ENCODE measurements at regions of chr9 and their contacts with region 1.

Region 1: GRCh38 chr9:86354011-86354817 is at the start of gene TUT7:
- DNase-seq: peak; percentile 95
- H3K4me3 Mint-ChIP-seq: peak within 1 kb of the TSS; percentile 88
- H3K27ac Mint-ChIP-seq: peak within 1 kb of the TSS; percentile 95
- H3K4me1 Mint-ChIP-seq: peaks cover 30% of the 10 kb centered on the region
- H3K27me3 Mint-ChIP-seq: no peaks in the 10 kb centered on the region
- total RNA-seq, gene TUT7: 22.7 to 23.5 TPM

Region 2: GRCh38 chr9:85741875-85742629 is 612.2 kb before region 1 on chr9 and contains the start of gene AGTPBP1:
- CTCF ChIA-PET with region 1: no interaction called
- intact Hi-C with region 1: loop called (anchors 1 kb)
- DNase-seq: peak; percentile 95
- H3K4me3 Mint-ChIP-seq: peak within 1 kb of the TSS; percentile 83
- H3K27ac Mint-ChIP-seq: peak within 1 kb of the TSS; percentile 94
- H3K4me1 Mint-ChIP-seq: peaks cover 30% of the 10 kb centered on the region
- H3K27me3 Mint-ChIP-seq: peaks cover 6% of the 10 kb centered on the region
- total RNA-seq, gene AGTPBP1: 37.6 to 39.0 TPM

Region 3: DNA sequence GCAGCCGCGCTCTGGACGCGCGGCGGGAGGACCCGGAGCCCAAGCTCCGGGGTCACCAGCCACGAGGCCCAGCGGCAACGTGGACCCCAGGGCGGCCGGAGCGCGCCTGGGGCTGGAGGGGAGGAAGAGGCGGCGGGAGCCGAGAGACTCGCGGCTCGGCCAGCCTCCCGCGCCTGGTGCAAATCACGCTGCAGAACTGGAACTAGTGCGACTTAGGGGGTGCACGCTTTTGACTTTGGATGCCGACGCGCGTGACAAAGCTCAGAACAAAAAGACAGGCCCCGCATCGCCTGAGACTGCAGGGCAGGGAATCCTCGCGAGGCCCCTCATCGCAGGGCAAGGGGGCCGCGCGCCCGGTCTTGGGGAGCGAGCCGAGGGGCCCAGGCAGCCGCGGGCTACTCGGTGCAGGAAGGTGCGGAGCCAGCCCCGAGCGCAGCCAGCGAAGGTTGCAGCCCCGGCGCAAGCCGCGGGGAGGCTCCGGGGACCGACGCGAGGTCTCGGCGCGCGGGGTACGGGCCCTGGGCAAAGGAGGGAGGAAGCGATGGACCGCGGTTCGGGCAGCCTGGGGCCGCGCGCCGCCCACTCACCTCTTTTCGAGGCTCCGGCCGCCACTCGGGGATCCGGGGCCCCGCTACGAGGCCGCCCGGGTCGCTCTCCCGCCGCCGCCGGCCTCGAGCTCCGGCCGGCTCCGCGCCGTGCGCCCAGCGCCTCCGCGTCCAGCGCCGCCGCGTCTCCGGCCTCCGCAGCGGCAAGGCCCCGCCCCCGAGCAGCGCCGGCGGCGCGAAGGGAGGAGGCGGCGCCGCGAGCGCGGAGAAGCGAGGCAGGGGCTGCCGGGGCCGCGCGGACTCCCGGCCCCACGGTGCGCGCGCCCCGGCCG is 255.2 kb before region 1 on chr9 and contains the start of gene GOLM1:
- CTCF ChIA-PET with region 1: no interaction called
- intact Hi-C with region 1: loop called (anchors 5 kb)
- DNase-seq: peak; percentile 40
- H3K4me3 Mint-ChIP-seq: peak within 1 kb of the TSS; percentile 77
- H3K27ac Mint-ChIP-seq: no peak within 1 kb of the TSS
- H3K4me1 Mint-ChIP-seq: peaks cover 4% of the 10 kb centered on the region
- H3K27me3 Mint-ChIP-seq: peaks cover 30% of the 10 kb centered on the region
- total RNA-seq, gene GOLM1: 0.89 to 0.93 TPM

Region 4: DNA sequence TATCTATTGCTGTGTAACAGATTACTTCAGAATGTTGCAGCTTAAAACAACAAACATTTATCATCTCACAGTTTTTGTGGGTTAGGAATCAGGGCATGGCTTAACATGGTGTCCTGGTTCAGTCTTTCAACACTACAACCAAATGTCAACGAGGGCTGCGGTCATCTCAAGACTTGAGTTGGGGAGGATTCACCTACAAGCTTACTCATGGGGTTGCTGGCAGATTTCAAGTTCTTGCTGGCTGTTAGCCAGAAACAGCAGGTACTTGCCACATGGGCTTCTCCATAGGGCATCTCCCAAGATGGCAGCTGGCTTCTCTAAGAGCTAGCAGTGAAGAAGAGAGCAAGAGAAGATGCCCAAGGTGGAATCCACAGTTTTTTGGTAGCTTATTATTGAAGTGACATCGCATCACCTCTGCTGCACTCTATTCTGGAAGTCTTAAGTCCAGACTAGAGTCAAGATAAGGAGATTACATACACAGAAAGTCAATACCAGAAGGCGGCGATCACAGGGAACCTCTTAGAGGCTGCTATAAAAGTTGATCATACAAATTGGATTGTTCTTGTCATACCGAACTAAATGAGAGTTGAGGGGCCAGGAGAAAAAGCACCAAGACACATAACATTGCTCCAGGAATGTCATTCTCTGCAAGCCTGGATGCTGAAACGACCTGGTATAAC is 137.0 kb before region 1 on chr9:
- CTCF ChIA-PET with region 1: no interaction called
- intact Hi-C with region 1: no loop called
- DNase-seq: no peak
- H3K4me3 Mint-ChIP-seq: no peak overlapping the region
- H3K27ac Mint-ChIP-seq: no peak overlapping the region
- H3K4me1 Mint-ChIP-seq: no peaks in the 10 kb centered on the region
- H3K27me3 Mint-ChIP-seq: peaks cover 3% of the 10 kb centered on the region

Region 5: GRCh38 chr9:86282077-86282978 is 71.9 kb before region 1 on chr9 and contains the start of gene ISCA1:
- CTCF ChIA-PET with region 1: no interaction called
- intact Hi-C with region 1: loop called (anchors 1 kb)
- DNase-seq: peak; percentile 96
- H3K4me3 Mint-ChIP-seq: peak within 1 kb of the TSS; percentile 89
- H3K27ac Mint-ChIP-seq: peak within 1 kb of the TSS; percentile 94
- H3K4me1 Mint-ChIP-seq: peaks cover 40% of the 10 kb centered on the region
- H3K27me3 Mint-ChIP-seq: no peaks in the 10 kb centered on the region
- total RNA-seq, gene ISCA1: 18.4 to 18.7 TPM

Region 6: DNA sequence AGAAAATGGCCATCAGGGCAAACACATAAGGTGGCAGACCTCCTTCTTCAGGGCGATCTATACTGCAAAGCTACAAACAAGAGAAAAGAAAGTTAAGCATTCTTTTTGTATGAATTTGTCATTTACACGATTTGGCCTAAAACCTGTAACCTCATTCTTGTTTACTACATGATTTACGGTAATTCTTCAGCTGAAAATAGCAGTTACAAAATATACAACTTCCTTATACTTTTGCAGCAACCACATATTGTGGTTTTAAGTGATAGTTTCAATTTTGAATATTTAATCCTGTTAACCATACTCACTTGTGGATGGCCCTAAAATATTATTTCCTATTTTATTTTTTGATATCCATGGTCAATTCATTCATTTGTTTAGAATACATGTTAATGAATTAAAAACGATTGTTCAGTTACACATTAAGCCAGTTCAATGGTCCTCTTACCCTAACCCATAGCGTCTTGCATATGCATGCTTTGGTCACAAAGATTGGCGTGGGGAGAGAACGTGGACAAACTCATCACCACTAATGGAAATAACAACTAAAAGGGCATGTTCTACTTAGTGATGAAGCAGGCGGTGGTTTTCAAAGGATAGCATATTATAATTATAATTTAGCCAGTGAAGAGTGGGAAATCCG is 16.6 kb before region 1 on chr9:
- CTCF ChIA-PET with region 1: no interaction called
- intact Hi-C with region 1: loop called (anchors 1 kb)
- DNase-seq: no peak
- H3K4me3 Mint-ChIP-seq: no peak overlapping the region
- H3K27ac Mint-ChIP-seq: no peak overlapping the region
- H3K4me1 Mint-ChIP-seq: peaks cover 39% of the 10 kb centered on the region
- H3K27me3 Mint-ChIP-seq: no peaks in the 10 kb centered on the region

Region 7: DNA sequence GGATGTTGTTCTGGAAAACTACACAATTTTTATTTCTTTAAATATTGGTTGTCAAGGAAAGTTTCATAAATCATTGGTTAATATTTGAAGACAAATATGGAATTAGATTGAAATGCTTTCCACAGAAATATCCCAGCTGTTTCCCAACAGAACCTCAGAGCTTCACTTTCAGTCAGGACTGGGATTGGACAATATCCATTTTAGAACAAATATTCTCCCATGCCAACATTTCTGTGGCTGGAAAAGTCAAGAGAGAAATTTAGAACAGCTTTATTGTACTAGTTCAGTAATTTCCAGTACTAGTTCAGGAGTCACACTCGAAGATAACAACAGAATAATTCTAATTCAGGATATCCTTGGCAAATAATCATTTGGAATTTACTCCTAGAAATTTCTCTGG is 116.1 kb after region 1 on chr9:
- CTCF ChIA-PET with region 1: no interaction called
- intact Hi-C with region 1: no loop called
- DNase-seq: no peak
- H3K4me3 Mint-ChIP-seq: no peak overlapping the region
- H3K27ac Mint-ChIP-seq: no peak overlapping the region
- H3K4me1 Mint-ChIP-seq: no peaks in the 10 kb centered on the region
- H3K27me3 Mint-ChIP-seq: peaks cover 16% of the 10 kb centered on the region

Region 8: GRCh38 chr9:86948074-86948929 is 594.1 kb after region 1 on chr9:
- CTCF ChIA-PET with region 1: no interaction called
- intact Hi-C with region 1: loop called (anchors 5 kb)
- DNase-seq: peak; percentile 82
- H3K4me3 Mint-ChIP-seq: peak overlapping the region; percentile 76
- H3K27ac Mint-ChIP-seq: no peak overlapping the region
- H3K4me1 Mint-ChIP-seq: peaks cover 2% of the 10 kb centered on the region
- H3K27me3 Mint-ChIP-seq: peaks cover 15% of the 10 kb centered on the region

Region 9: GRCh38 chr9:87973730-87974292 is 1619.6 kb after region 1 on chr9:
- CTCF ChIA-PET with region 1: no interaction called
- intact Hi-C with region 1: loop called (anchors 10 kb)
- DNase-seq: no peak
- H3K4me3 Mint-ChIP-seq: peak overlapping the region; percentile 93
- H3K27ac Mint-ChIP-seq: no peak overlapping the region
- H3K4me1 Mint-ChIP-seq: peaks cover 19% of the 10 kb centered on the region
- H3K27me3 Mint-ChIP-seq: no peaks in the 10 kb centered on the region

Measured in activated naive CD4-positive, alpha-beta T cell treated with anti-CD3 and anti-CD28 coated beads for 36 hours (primary cell).